ENCODE measurements at regions of chr11 and their contacts with region 1.

Region 1: GRCh38 chr11:62771144-62772021 is at the start of gene TAF6L:
- DNase-seq: peak; percentile 91
- H3K4me3 Mint-ChIP-seq: peak within 1 kb of the TSS; percentile 89
- H3K27ac Mint-ChIP-seq: peak within 1 kb of the TSS; percentile 91
- H3K4me1 Mint-ChIP-seq: peaks cover 30% of the 10 kb centered on the region
- H3K27me3 Mint-ChIP-seq: no peaks in the 10 kb centered on the region
- total RNA-seq, gene TAF6L: 19.4 and 20.7 TPM in 2 replicates

Region 2: GRCh38 chr11:62645956-62646824 is 125.2 kb before region 1 on chr11 and contains the start of gene GANAB:
- intact Hi-C with region 1: loop called (anchors 1 kb)
- DNase-seq: peak; percentile 97
- H3K4me3 Mint-ChIP-seq: peak within 1 kb of the TSS; percentile 100
- H3K27ac Mint-ChIP-seq: peak within 1 kb of the TSS; percentile 98
- H3K4me1 Mint-ChIP-seq: peaks cover 25% of the 10 kb centered on the region
- H3K27me3 Mint-ChIP-seq: no peaks in the 10 kb centered on the region
- total RNA-seq, gene GANAB: 238 and 255 TPM in 2 replicates

Region 3: DNA sequence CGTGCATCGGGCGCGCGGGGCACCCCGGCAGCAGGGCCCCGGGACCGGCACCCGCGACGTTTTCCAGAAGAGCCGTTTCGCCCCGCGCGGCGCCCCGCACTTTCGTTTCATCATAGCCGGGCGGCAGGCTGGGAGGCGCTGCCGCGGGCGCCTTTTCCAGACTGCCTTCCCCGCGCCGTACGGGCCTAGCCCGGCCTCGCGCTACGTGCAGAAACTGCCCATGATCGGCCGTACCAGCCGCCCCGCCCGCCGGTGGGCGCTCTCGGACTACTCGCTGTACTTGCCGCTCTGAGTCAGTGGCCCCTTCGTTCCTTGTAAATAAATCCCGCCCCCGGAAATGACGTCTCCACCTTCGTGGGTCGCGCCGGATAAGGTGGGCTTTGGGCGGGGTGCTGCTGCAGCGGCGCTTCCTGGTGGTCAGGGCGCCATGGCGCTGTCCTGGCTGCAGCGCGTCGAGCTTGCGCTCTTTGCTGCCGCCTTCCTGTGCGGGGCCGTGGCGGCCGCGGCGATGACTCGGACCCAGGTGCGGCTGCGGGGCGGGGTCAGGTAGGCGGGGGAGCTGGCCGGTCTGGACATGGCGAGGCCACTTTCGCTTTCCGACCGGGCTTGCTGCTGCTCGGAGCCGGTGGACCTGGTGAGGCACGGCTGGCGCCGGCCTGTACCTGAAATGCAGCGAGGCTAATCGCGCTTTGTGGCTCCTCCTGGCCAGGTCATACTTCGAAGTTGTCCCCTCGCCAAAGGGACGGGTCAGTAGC is 15.8 kb after region 1 on chr11 and contains the start of gene TMEM179B:
- intact Hi-C with region 1: loop called (anchors 1 kb)
- DNase-seq: peak; percentile 96
- H3K4me3 Mint-ChIP-seq: peak within 1 kb of the TSS; percentile 95
- H3K27ac Mint-ChIP-seq: peak within 1 kb of the TSS; percentile 94
- H3K4me1 Mint-ChIP-seq: peaks cover 42% of the 10 kb centered on the region
- H3K27me3 Mint-ChIP-seq: no peaks in the 10 kb centered on the region
- total RNA-seq, gene TMEM179B: 40.6 and 43.0 TPM in 2 replicates

Region 4: GRCh38 chr11:62831520-62832335 is 60.3 kb after region 1 on chr11 and contains the start of gene STX5:
- intact Hi-C with region 1: loop called (anchors 1 kb)
- DNase-seq: peak; percentile 99
- H3K4me3 Mint-ChIP-seq: peak within 1 kb of the TSS; percentile 93
- H3K27ac Mint-ChIP-seq: peak within 1 kb of the TSS; percentile 99
- H3K4me1 Mint-ChIP-seq: peaks cover 41% of the 10 kb centered on the region
- H3K27me3 Mint-ChIP-seq: no peaks in the 10 kb centered on the region
- total RNA-seq, gene STX5: 34.2 and 39.9 TPM in 2 replicates

Region 5: DNA sequence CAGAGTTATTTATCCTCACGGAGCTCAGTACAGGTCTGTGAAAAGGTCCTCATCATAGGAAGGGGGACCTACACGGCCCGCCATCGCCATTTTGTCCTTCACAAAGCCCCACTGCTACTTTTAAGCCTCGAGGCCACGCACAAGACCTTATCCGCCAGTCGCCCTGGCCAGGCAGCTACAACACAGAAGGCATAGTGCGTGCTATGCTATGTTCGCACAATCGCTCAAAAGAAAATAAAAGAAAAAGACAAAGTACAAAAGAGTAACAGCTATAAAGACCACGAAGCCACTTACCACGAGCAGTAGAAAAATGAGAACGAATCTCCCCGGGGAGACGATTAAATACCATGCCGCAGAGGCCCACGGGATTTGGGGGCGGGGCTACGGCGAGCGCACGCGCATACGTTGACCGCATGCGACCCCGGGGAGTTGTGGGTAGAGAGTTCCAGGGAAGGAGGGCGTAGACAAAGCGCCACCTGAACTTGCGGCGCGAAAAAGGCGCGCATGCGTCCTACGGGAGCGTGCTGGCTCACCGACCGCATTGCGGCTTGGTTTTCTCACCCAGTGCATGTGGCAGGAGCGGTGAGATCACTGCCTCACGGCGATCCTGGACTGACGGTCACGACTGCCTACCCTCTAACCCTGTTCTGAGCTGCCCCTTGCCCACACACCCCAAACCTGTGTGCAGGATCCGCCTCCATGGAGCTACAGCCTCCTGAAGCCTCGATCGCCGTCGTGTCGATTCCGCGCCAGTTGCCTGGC is 84.4 kb after region 1 on chr11:
- intact Hi-C with region 1: loop called (anchors 1 kb)
- DNase-seq: peak; percentile 99
- H3K4me3 Mint-ChIP-seq: peak overlapping the region; percentile 98
- H3K27ac Mint-ChIP-seq: peak overlapping the region; percentile 98
- H3K4me1 Mint-ChIP-seq: peaks cover 71% of the 10 kb centered on the region
- H3K27me3 Mint-ChIP-seq: peaks cover 5% of the 10 kb centered on the region